Left lung (tissue), 14 donors: ENCODE measurements at regions of chr17 and their contacts with region 1.

Region 1: GRCh38 chr17:50956750-50957523 is 90.8 kb upstream of the TOB1 start:
- DNase-seq: peak in 2 of 4 donors; percentile 70 to 71
- ATAC-seq: peak; percentile 84
- H3K4me3 ChIP-seq: no peak overlapping the region
- H3K27ac ChIP-seq: no peak overlapping the region
- H3K4me1 ChIP-seq: peaks cover 5 to 8% of the 10 kb centered on the region in 2 donors
- H3K27me3 ChIP-seq: no peaks in the 10 kb centered on the region
- CTCF ChIP-seq: peak; percentile 51 to 72

Region 2: DNA sequence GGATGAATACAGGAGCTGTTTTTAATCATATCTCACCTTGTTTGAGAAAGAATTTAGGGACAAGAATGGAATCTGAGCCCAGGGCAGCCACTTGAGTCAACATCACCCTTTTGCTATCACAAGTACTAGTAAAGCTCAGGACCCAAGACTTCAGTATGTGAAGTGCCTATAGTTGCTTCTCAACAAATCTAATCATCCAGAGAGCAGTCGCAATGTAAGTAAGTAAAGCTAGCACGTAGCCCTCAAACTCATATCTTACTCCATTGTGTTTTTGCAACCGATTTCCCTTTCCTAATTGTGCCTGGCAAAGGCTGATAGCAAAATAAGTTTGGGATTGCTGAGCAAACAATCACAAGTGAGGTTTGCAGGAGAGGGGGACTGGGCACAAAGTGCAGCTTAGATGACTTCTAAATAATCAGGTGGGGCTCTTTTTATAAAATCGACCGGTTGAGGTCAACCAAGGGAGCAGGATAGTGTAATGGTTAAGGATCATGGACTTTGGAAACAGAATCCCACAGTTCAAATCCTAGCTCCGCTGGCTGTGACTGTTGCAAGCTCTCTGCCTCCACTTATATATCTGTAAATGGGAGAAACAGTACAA is 103.8 kb before region 1 on chr17:
- intact Hi-C with region 1: loop called (anchors 5 to 10 kb)
- DNase-seq: no peak
- ATAC-seq: peak; percentile 45
- H3K4me3 ChIP-seq: no peak overlapping the region
- H3K27ac ChIP-seq: peak overlapping the region; percentile 3 to 48
- H3K4me1 ChIP-seq: peaks cover 4 to 29% of the 10 kb centered on the region in 2 donors
- H3K27me3 ChIP-seq: no peaks in the 10 kb centered on the region
- CTCF ChIP-seq: no peak